CD4-positive, alpha-beta memory T cell (primary cell): ENCODE measurements at regions of chr5 and their contacts with region 1.

Region 1: DNA sequence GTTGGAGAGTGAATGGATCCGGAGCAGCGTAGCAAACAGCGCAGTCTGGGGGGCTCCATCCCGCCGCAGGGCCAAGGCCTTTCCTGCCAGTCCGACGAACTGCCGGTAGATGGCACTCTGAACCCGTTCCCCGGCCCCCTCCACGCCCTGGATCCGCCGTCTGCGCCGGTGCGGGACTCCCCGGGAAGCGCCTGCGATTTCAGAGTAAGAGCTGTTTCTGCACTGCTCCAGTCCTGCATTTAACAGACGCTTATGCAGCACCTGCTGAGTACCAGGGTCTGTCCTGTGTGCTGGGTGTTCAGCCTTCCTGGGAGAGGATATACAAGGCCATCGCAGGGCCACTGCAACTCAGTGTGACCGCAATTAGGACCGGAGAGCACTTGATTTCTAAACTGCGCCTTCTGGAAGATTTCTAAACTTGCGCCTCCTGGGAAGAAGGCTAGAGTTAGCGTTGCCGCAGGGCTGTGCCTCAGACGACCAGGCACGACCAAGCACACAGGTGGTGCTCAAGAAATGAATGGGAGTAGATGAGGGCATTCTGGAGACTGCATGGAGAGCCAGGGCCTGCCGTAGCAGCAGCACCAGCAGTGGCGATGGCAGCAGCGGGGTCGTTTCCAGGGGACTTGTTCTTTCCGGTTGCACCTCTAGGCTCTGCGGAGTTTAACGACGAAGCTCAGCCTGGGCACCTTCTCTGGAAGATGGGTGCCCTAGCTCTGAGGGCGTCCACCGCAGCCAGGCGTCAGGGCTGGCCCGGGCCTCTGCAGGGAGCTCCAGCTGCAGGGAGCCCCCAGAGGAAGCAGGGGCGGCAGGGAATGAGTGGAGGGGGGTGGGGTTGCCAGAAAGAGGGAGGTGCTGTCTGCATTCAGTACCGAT is 14.3 kb upstream of the TIFAB start:
- DNase-seq: peak; percentile 40 to 47 (median 43)
- H3K4me3 ChIP-seq: no peak overlapping the region
- H3K4me3 Mint-ChIP-seq: peak overlapping the region in 6 of 8 donors; percentile 12 to 77 (median 62)
- H3K27ac ChIP-seq: no peak overlapping the region
- H3K27ac Mint-ChIP-seq: no peak overlapping the region
- H3K4me1 ChIP-seq: no peaks in the 10 kb centered on the region
- H3K4me1 Mint-ChIP-seq: peaks cover 4 to 11% (median 6%) of the 10 kb centered on the region in 4 donors
- H3K27me3 ChIP-seq: no peaks in the 10 kb centered on the region
- H3K27me3 Mint-ChIP-seq: peaks cover 15 to 31% of the 10 kb centered on the region in 2 donors

Region 2: DNA sequence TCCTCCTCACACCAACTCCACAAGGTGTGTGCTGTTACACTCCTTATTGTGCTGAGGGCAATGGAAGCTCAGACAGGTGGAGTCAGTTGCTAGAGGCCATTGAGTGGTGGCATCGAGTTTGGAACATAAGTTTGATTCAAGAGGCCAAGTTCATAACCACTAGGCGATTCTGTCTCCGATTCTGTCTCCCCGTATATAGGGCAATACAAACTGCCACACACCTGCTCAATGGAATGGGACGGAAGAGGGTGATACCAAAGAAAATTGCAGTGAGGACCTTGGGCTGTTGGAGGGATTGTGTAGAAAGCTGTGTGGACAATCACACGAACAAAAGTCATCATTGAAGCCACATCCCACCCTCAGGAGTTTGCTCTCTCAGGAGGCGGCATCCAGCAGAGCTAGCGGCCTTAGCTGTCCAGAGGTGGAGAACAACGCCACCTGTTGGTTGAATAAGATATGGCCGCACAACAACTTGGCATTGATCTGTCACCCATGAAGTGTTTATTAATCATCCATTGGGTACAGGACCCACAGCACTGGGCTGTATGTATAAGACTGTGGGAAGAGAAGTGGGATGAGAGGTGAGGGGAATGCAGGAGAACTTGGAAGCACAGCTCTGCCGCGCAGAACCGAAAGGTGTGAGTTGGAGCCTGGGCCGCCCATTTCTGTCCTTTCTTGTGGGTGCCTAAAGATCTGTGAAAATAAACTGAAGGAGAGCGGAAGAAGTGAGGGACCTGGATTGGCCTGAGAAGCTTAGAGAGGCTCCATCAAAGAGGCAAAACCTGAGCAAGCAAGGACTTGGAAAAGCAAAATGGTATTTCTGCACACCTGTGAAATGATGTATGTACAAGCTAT is 85.4 kb after region 1 on chr5:
- CTCF ChIA-PET with region 1: interaction called, 100 read pairs
- POLR2A ChIA-PET with region 1: no interaction called
- intact Hi-C with region 1: loop called (anchors 1 kb)
- DNase-seq: peak; percentile 33 to 48 (median 40)
- H3K4me3 ChIP-seq: no peak overlapping the region
- H3K4me3 Mint-ChIP-seq: no peak overlapping the region
- H3K27ac ChIP-seq: no peak overlapping the region
- H3K27ac Mint-ChIP-seq: no peak overlapping the region
- H3K4me1 ChIP-seq: no peaks in the 10 kb centered on the region
- H3K4me1 Mint-ChIP-seq: peaks cover 0 to 2% (median 1%) of the 10 kb centered on the region in 4 donors
- H3K27me3 ChIP-seq: peaks cover 5% of the 10 kb centered on the region
- H3K27me3 Mint-ChIP-seq: peaks cover 22 to 45% of the 10 kb centered on the region in 2 donors

Region 3: DNA sequence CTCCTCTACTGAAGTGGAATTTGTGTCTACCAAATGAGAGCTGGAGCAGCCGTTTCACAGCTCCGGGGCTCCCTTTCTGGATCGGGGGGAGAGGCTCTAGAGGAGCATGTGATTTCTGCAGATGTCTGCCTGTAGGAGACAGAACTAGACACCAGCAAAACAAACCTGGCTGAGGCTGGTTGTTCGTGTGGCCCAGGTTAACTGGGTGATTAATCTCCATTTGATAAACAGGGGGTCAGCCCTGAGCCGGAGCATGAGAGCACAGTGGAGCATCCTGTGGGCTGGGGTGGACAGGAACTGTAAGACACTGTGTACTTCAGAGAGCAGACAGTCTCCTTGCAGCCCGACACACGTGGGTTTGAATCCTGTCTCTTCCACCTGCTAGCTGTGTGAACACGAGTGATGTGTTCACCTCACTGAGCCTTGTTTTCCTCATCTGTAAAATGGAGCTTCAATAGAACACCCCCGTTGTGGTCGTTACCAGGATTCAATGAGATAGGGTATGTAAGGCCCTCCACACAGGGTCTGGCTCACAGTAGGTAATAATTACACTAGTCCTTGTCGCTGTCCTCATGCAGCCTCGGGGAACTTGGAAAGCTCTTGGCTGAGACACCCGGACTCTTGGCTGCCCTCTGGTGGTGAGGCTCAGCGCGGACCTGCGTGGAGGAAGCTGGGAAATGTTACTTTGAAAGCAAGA is 99.5 kb after region 1 on chr5:
- CTCF ChIA-PET with region 1: interaction called, 55 read pairs
- POLR2A ChIA-PET with region 1: interaction called, 3 read pairs
- intact Hi-C with region 1: loop called (anchors 1 kb)
- DNase-seq: peak; percentile 26 to 49 (median 43)
- H3K4me3 ChIP-seq: no peak overlapping the region
- H3K4me3 Mint-ChIP-seq: peak overlapping the region in 1 of 8 donors; percentile 37
- H3K27ac ChIP-seq: no peak overlapping the region
- H3K27ac Mint-ChIP-seq: no peak overlapping the region
- H3K4me1 ChIP-seq: no peaks in the 10 kb centered on the region
- H3K4me1 Mint-ChIP-seq: peaks cover 5 to 12% (median 6%) of the 10 kb centered on the region in 4 donors
- H3K27me3 ChIP-seq: no peaks in the 10 kb centered on the region
- H3K27me3 Mint-ChIP-seq: peaks cover 4 to 10% of the 10 kb centered on the region in 2 donors